Left cardiac atrium (tissue), 4 donors: ENCODE measurements at regions of chrX and their contacts with region 1.

Region 1: DNA sequence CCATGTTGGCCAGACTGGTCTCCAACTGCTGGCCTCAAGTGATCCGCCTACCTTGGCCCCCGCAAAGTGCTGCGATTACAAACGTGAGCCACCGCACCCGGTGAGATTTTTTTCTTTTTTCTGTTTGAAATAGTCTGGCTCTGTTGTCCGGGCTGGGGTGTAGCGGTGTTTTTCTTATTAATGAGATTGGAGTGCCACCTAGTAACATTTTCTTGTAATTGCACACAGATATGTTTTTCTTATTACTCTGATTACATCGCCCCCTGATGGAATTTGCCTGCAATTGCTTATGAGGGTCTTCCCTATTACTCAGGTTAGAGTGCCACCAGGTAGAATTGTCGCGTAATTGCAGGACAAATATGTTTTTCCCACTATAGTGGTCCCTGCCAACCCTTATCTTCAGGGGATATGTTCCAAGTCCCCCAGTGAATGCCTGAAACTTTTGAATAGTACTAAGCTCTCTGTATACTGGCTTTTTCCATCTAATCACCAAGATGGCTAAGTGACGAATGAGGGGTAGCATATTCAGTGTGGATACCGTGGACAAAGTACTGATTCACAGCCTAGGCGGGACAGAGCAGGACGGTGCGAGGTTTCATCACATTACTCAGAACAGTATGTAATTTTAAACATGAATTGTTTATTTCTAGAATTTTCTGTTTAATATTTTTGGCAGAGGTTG is 8.6 kb upstream of the PDHA1 start:
- DNase-seq: no peak
- ATAC-seq: no peak

Region 2: DNA sequence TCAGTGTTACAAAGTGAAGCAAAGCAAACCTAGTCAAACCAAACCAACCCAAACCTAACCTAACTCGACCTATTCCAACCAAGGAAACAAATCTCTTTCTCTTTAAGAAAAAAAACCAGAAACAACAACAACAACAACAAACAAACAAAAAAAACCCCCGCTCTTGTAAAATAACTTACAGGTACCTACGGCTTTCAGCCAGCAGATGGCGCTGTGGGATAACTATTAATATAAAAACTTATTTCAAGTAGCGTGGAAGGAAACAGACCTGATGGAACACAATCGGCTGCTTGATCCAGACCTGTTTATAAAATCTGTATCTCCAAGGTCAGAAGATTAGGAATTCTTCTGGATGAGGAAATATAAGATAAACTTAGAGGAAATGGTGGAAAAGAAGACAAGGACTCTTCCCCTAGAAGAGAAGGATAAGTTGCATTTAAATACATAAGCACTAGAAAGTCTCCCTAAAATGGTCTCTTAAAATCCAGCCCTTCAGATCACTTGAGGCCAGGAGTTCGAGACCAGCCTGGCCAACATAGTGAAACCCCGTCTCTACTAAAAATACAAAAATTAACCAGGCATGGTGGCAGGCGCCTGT is 944.0 kb before region 1 on chrX:
- intact Hi-C with region 1: loop called (anchors 5 to 10 kb)
- DNase-seq: peak; percentile 61
- ATAC-seq: no peak

Region 3: DNA sequence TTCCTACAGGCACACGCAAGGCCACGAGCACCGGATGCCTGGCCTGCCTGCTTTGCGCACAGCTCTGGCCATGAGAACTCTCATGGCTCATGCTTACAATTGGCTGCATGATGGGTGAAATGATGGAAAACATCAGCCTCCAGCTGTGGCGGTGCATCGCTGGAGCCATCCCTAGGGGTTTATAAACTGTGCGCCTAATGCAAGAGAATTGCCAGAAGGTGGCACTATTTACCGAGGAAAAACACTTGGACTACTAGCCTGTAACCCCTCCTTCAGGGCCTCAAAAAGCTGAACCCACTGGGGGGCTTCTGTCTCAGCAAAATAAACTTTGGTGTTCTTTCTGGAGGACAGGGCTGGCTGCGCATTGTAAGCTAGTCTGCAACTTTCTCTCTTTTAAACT is 403.1 kb before region 1 on chrX:
- intact Hi-C with region 1: loop called in 1 of 2 experiments (anchors 5 kb)
- DNase-seq: no peak
- ATAC-seq: peak in 1 of 2 donors; percentile 34

Region 4: DNA sequence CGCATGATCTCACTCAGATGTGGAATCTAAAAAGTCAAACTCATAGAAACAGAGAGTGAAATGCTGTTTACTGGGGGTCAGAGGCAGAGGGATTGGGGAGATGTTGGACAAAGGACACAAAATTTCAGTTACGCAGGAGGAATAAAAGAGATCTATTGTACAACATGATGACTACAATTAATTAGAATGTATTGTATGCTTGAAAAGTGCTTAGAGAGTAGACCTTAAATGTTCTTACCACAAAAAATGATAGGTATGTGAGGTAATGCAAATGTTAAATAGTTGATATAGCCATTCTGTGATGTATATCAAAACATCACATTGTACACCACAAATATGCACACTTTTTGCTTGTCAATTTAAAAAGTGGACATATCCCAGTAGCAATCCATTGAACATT is 315.1 kb before region 1 on chrX:
- intact Hi-C with region 1: loop called in 1 of 2 experiments (anchors 10 kb)
- DNase-seq: no peak
- ATAC-seq: no peak

Region 5: DNA sequence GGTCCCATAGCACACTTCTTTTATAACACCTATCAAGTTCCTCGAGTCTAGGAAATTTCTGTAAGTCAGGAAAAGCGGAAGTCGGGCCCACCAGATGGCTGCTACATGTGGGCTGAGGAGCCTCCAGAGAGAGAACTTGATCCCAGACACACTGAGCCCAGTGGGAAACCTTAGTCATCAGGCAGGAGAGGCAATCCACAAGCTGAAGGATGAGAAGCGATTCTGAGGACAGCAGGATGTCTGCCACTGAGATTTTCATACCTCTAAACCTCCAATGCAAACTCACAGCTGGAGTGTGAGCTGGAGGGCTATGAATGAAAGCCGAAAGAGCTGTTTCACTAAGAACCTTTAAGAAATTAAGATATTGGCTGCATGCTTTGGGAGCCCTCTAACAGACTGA is 44.0 kb before region 1 on chrX:
- intact Hi-C with region 1: no loop called
- DNase-seq: no peak
- ATAC-seq: no peak